Transverse colon (tissue), 4 donors: ENCODE measurements at regions of chr18 and their contacts with region 1.

Region 1: GRCh38 chr18:51082571-51083267 is 52.7 kb downstream of the SMAD4 start:
- DNase-seq: no peak
- H3K4me3 ChIP-seq: no peak overlapping the region
- H3K27ac ChIP-seq: no peak overlapping the region
- H3K4me1 ChIP-seq: no peaks in the 10 kb centered on the region
- H3K27me3 ChIP-seq: no peaks in the 10 kb centered on the region
- CTCF ChIP-seq: no peak
- EP300 ChIP-seq: no peak
- POLR2A ChIP-seq: no peak

Region 2: DNA sequence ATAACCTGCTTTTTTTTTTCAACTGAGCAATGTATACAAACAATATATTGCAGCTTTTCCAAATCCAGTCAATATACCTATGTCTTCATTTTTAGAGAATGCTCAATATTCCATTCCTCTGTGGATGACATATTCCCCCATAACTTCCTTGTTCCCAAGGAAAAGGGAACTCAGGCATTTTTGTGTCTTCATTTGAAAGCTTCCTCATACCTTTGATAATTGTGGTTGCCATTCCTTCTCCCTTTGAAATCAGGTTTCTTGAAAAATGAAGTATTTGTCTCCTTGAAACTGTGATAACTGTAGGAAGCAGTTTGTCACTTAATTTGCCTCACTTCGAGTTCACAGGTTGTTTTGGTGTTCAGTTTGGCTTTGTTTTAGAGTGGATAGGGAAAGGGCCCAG is 101.3 kb before region 1 on chr18:
- in situ Hi-C with region 1: no loop called
- intact Hi-C with region 1: no loop called
- DNase-seq: no peak
- H3K4me3 ChIP-seq: no peak overlapping the region
- H3K27ac ChIP-seq: peak overlapping the region; percentile 52 to 75 (median 69)
- H3K4me1 ChIP-seq: peaks cover 0 to 23% (median 16%) of the 10 kb centered on the region in 4 donors
- H3K27me3 ChIP-seq: no peaks in the 10 kb centered on the region
- CTCF ChIP-seq: no peak
- EP300 ChIP-seq: no peak
- POLR2A ChIP-seq: no peak

Region 3: DNA sequence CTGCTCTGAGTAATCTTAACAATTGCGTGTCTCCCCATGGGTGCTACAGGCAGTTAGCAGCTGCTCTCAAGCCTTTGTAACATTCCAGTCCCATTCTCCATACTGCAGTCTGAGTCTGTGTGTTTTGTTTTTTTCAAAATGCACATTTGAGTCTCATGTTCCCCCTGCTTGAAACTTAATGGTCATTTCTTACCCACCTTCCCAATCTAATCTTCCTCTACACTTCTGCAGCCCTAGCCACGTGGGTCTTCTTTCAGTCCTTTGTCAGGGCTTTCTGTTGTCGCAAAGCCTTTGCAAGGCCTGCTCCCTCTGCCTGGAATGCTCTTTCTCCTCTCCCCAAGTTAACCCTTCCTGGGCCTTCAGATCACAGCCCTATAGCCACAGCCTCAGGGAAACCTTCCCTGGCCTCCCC is 90.4 kb before region 1 on chr18:
- in situ Hi-C with region 1: no loop called
- intact Hi-C with region 1: no loop called
- DNase-seq: no peak
- H3K4me3 ChIP-seq: no peak overlapping the region
- H3K27ac ChIP-seq: no peak overlapping the region
- H3K4me1 ChIP-seq: no peaks in the 10 kb centered on the region
- H3K27me3 ChIP-seq: no peaks in the 10 kb centered on the region
- CTCF ChIP-seq: no peak
- EP300 ChIP-seq: no peak
- POLR2A ChIP-seq: no peak

Region 4: GRCh38 chr18:51029694-51030536 is 52.8 kb before region 1 on chr18 and contains the start of gene SMAD4:
- in situ Hi-C with region 1: no loop called
- intact Hi-C with region 1: no loop called
- DNase-seq: peak; percentile 98
- H3K4me3 ChIP-seq: peak within 1 kb of the TSS; percentile 87 to 90 (median 88)
- H3K27ac ChIP-seq: peak within 1 kb of the TSS; percentile 97 to 99 (median 98)
- H3K4me1 ChIP-seq: peaks cover 13 to 61% (median 35%) of the 10 kb centered on the region in 4 donors
- H3K27me3 ChIP-seq: no peaks in the 10 kb centered on the region
- CTCF ChIP-seq: no peak
- EP300 ChIP-seq: no peak
- POLR2A ChIP-seq: peak; percentile 95
- total RNA-seq, gene SMAD4: 77.1 to 172 (median 85.6) TPM

Region 5: DNA sequence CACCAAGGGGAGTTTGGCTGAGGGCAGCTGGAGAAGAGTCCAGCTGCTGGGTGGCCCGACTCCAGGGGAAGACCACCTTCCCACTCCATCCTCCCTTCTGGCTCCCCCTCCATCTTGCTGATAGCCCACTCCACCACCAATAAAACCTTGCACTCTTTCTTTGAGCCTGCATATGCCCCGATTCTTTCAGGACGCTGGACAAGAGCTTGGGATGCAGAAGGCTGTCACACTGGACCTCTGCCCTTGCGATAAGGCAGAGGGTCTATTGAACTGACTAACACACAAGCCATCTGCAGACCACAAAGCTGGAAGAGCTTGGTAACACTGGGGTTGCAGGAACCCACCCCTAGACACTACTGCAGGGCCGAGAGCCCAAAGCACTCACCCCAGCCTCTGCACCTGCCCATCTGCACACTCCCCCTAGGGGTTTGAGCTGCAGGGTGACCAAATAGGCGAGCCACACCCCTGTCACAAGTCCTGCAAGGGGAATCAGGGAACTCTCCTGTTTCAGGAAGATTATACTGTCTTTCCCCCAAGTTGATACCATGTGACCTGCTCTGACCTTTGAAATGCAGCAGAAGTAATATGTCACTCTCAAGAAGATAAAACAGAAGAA is 17.8 kb after region 1 on chr18:
- in situ Hi-C with region 1: no loop called
- intact Hi-C with region 1: loop called (anchors 1 kb)
- DNase-seq: no peak
- H3K4me3 ChIP-seq: no peak overlapping the region
- H3K27ac ChIP-seq: no peak overlapping the region
- H3K4me1 ChIP-seq: peaks cover 0 to 6% (median 1%) of the 10 kb centered on the region in 4 donors
- H3K27me3 ChIP-seq: no peaks in the 10 kb centered on the region
- CTCF ChIP-seq: no peak
- EP300 ChIP-seq: no peak
- POLR2A ChIP-seq: no peak